Activated naive CD8-positive, alpha-beta T cell treated with anti-CD3 and anti-CD28 coated beads, Interleukin-2, amount 10 ng/mL, durations not matched to agents 7 days and 5 days (primary cell): ENCODE measurements at regions of chr4 and their contacts with region 1.

Region 1: DNA sequence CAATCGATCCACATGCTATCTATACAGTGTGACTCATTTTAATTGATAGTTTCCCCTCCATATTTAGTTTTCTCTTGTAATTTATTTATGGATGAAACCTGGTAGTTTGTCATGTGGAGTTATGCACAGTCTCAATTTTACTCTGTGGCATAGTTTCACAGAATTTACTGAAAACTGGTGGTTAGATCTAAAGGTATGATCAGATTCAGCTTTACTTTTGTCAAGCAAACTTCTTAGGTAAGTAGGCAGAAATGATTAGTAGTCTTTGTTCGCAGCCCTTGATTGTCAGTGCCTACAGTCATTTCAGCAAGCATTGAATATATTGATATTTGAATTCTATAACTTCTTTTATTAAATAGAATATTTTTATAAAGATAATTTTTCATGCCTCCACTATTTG is 2.5 kb downstream of the ADD1 start:
- DNase-seq: no peak
- ATAC-seq: no peak
- H3K4me3 Mint-ChIP-seq: peak overlapping the region; percentile 94
- H3K27ac Mint-ChIP-seq: no peak overlapping the region
- H3K4me1 Mint-ChIP-seq: peaks cover 40% of the 10 kb centered on the region
- H3K27me3 Mint-ChIP-seq: no peaks in the 10 kb centered on the region

Region 2: GRCh38 chr4:2834331-2834987 is 11.7 kb before region 1 on chr4:
- POLR2A ChIA-PET with region 1: interaction called, 14 read pairs
- DNase-seq: peak; percentile 45
- ATAC-seq: peak; percentile 2
- H3K4me3 Mint-ChIP-seq: peak overlapping the region; percentile 68
- H3K27ac Mint-ChIP-seq: peak overlapping the region; percentile 92
- H3K4me1 Mint-ChIP-seq: peaks cover 35% of the 10 kb centered on the region
- H3K27me3 Mint-ChIP-seq: no peaks in the 10 kb centered on the region

Region 3: GRCh38 chr4:3041192-3042142 is 195.3 kb after region 1 on chr4:
- POLR2A ChIA-PET with region 1: no interaction called
- DNase-seq: peak; percentile 71
- ATAC-seq: peak; percentile 61
- H3K4me3 Mint-ChIP-seq: peak overlapping the region; percentile 91
- H3K27ac Mint-ChIP-seq: peak overlapping the region; percentile 94
- H3K4me1 Mint-ChIP-seq: peaks cover 63% of the 10 kb centered on the region
- H3K27me3 Mint-ChIP-seq: peaks cover 5% of the 10 kb centered on the region